ENCODE measurements at regions of chr5 and their contacts with region 1.

Region 1: GRCh38 chr5:89282554-89283510 is 399.8 kb upstream of the MEF2C start:
- DNase-seq: no peak

Region 2: GRCh38 chr5:87936667-87937066 is 1346.2 kb before region 1 on chr5:
- intact Hi-C with region 1: loop called in 1 of 2 experiments (anchors 10 kb)
- DNase-seq: no peak

Region 3: GRCh38 chr5:89303033-89303480 is 20.2 kb after region 1 on chr5:
- intact Hi-C with region 1: no loop called
- DNase-seq: no peak